PC-9 (cell line): ENCODE measurements at regions of chr7 and their contacts with region 1.

Region 1: DNA sequence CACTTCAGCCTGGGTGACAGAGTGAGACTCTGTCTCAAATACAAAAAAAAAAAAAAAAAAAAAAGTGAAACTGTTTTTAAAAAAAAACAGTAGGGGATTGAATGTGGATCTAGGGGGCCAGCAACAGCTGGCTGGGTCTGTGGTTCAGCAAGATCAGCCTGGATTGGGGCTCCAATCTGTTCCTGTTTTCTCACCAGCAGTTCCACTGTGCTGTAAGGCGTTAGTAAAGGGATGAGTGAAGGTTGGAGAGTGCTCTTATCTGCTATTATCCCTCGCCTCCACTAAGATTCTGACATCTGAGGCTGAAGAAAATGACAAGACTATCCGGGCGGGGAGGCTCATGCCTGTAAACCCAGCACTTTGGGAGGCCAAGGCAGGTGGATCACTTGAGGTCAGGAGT is 41.6 kb upstream of the GTF2IRD1 start:
- DNase-seq: no peak
- H3K4me3 ChIP-seq: no peak overlapping the region
- H3K27ac ChIP-seq: no peak overlapping the region
- H3K4me1 ChIP-seq: no peaks in the 10 kb centered on the region
- H3K27me3 ChIP-seq: no peaks in the 10 kb centered on the region
- CTCF ChIP-seq: no peak

Region 2: DNA sequence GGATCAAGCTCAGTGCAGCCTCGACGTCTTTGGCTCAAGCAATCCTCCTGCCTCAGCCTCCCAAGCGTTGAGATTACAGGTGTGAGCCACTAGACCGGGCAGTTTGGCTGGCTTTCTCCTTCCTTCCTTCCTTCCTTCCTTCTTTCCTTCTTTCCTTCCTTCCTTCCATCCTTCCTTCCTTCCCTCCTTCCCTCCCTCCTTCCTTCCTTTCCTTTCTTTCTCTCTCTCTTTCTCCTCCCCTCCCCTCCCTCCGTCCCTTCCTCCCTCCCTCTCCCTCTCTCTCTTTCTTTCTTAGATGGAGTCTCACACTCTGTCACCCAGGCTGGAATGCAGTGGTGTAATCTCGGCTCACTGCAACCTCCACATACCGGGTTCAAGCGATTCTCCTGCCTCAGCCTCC is 752.1 kb before region 1 on chr7:
- CTCF ChIA-PET with region 1: no interaction called
- POLR2A ChIA-PET with region 1: no interaction called
- intact Hi-C with region 1: no loop called
- DNase-seq: no peak
- H3K4me3 ChIP-seq: no peak overlapping the region
- H3K27ac ChIP-seq: no peak overlapping the region
- H3K4me1 ChIP-seq: 0 out of 2 replicates have a peak, but pooled peaks cover 4% of the 10 kb centered on the region
- H3K27me3 ChIP-seq: no peaks in the 10 kb centered on the region
- CTCF ChIP-seq: no peak

Region 3: DNA sequence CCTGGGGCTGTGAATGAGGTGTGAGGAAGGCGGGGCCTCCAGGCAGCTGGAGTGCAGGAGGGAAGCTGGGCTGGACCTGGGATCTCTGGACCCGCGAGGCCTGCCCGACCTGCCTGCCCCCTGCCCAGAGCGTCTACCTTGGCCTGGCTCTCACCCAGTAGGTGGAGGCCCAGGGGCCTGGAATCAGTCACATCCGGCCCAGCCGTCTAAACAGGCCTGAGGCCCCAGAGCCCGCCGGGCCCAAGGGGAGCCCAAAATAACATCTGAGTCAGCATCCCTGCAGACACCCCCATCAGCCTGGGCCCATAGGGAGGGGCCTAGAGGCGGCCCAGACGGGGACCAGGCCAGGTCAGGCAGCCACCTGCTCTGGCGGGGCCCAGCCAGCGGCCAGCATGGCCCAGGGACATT is 399.2 kb before region 1 on chr7:
- CTCF ChIA-PET with region 1: no interaction called
- POLR2A ChIA-PET with region 1: no interaction called
- intact Hi-C with region 1: no loop called
- DNase-seq: peak in 1 of 2 experiments; percentile 60
- H3K4me3 ChIP-seq: no peak overlapping the region
- H3K27ac ChIP-seq: no peak overlapping the region
- H3K4me1 ChIP-seq: no peaks in the 10 kb centered on the region
- H3K27me3 ChIP-seq: no peaks in the 10 kb centered on the region
- CTCF ChIP-seq: no peak

Region 4: GRCh38 chr7:74043523-74043951 is 368.5 kb before region 1 on chr7:
- CTCF ChIA-PET with region 1: no interaction called
- POLR2A ChIA-PET with region 1: interaction called, 20 read pairs
- intact Hi-C with region 1: no loop called
- DNase-seq: no peak
- H3K4me3 ChIP-seq: no peak overlapping the region
- H3K27ac ChIP-seq: no peak overlapping the region
- H3K4me1 ChIP-seq: no peaks in the 10 kb centered on the region
- H3K27me3 ChIP-seq: peaks cover 7% of the 10 kb centered on the region; the same call in 1 of the 2 replicates
- CTCF ChIP-seq: no peak

Region 5: DNA sequence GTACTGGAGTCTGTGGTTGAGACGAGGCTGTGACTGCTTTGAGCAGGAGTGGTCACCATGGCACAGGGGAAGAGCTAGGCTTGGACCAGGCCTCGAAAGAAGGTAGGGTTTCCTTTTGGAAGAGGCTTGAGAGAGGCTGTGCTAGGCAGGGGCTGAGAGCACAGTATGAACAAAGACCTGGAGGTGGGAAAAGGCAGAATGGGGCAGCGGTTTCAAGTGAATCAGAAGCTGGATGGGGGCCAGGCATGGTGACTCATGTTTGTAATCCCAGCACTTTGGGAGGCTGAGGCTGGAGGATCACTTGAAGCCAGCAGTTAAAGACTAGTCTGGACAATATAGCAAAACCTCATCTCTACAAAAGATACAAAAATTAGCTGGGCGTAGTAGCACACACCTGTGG is 57.0 kb before region 1 on chr7:
- CTCF ChIA-PET with region 1: no interaction called
- POLR2A ChIA-PET with region 1: no interaction called
- intact Hi-C with region 1: no loop called
- DNase-seq: peak; percentile 63 to 67
- H3K4me3 ChIP-seq: no peak overlapping the region
- H3K27ac ChIP-seq: no peak overlapping the region
- H3K4me1 ChIP-seq: peaks cover 12% of the 10 kb centered on the region
- H3K27me3 ChIP-seq: no peaks in the 10 kb centered on the region
- CTCF ChIP-seq: no peak

Region 6: GRCh38 chr7:74554178-74554577 is 142.1 kb after region 1 on chr7:
- CTCF ChIA-PET with region 1: no interaction called
- POLR2A ChIA-PET with region 1: no interaction called
- intact Hi-C with region 1: no loop called
- DNase-seq: no peak
- H3K4me3 ChIP-seq: no peak overlapping the region
- H3K27ac ChIP-seq: no peak overlapping the region
- H3K4me1 ChIP-seq: no peaks in the 10 kb centered on the region
- H3K27me3 ChIP-seq: no peaks in the 10 kb centered on the region
- CTCF ChIP-seq: no peak